Right cardiac atrium (tissue), 5 donors: ENCODE measurements at regions of chr1 and their contacts with region 1.

Region 1: DNA sequence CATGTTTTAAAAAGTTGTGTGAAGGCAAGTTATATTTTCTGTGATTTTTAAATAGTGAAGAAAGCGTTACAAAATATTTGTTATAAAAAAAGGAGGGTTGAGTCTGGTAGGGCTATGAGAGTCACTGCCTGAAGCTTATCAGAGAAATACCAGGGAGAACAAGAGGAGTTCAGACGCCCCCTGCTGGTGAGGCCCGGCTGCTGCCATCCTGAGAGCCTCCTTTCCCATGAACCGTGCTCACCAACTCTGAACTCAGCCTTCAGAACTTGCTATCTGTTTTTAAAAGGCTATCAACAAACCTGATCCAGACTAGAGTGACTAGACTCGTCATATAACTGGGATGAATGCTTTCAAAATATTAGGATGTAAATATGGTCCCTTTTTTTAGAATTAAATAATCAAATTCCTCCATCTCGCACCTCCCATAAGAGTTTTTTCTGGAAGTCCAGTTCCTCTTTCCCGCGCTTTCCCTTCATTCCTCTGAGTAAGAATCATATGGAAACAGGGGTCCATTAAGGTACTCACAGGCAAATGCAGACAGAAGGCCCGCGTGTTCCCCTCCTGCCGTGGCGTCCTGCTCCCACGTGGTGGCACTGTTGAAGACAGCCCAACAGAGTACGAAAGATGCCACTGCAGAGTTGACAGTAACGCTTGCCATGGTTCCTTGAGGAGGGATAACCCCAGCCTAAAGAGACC is 26.2 kb upstream of the SPATA6 start:
- DNase-seq: peak; percentile 81 to 94 (median 90)
- ATAC-seq: peak; percentile 92
- H3K4me3 ChIP-seq: no peak overlapping the region
- H3K27ac ChIP-seq: no peak overlapping the region
- H3K4me1 ChIP-seq: peaks cover 4% of the 10 kb centered on the region
- H3K27me3 ChIP-seq: no peaks in the 10 kb centered on the region

Region 2: DNA sequence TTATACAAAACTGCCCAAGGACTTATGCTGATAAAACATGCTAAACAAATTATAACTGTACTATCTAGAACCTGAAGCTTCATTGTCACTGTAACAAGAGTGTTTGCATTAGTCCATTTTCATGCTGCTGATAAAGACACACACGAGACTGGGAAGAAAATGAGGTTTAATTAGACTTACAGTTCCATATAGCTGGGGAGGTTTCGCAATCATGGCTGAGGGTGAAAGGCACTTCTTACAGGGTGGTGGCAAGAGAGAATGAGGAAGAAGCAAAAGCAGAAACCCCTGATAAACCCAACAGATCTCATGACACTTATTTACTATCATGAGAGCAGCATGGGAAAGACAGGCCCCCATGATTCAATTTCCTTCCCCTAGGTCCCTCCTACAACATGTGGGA is 126.6 kb before region 1 on chr1:
- intact Hi-C with region 1: loop called in 1 of 4 experiments (anchors 10 kb)
- DNase-seq: no peak
- ATAC-seq: no peak
- H3K4me3 ChIP-seq: no peak overlapping the region
- H3K27ac ChIP-seq: no peak overlapping the region
- H3K4me1 ChIP-seq: no peaks in the 10 kb centered on the region
- H3K27me3 ChIP-seq: no peaks in the 10 kb centered on the region